ENCODE measurements at regions of chr21 and their contacts with region 1.

Region 1: DNA sequence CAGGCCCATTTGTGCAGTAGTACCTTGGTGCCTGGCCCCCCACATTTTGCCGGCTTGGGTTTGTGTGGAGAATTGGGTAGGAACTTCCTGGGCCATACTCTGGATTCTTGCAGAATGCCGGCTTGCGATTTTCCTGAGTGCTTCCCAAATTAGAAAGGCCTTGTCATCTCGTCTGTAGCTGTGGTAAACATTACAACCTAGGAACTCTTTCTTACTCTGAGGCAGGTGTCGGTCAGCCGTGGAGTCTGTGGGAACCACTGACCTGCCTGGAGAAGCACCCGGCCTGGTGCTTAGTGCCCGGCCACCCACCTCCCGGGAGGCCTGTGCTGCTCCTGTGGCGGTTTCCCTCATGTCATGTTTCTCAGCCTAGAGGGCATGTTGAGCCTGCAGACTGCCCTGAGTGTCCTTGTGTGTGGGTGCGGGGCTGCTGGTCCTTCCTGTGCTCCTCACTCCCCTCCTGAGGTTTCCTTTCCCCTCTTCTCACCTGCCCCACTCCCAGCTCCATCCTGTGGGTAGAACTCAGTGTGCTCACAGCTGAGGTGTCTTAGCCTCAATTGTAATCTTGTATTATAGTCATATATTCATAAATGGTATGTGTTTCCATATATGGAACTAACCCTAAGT is 64.7 kb downstream of the S100B start:
- DNase-seq: peak in 1 of 2 donors; percentile 32
- ATAC-seq: peak in 1 of 3 donors; percentile 11
- H3K4me3 ChIP-seq: no peak overlapping the region
- H3K4me3 Mint-ChIP-seq: no peak overlapping the region
- H3K27ac ChIP-seq: no peak overlapping the region
- H3K27ac Mint-ChIP-seq: peak overlapping the region in 1 of 2 donors; percentile 79
- H3K4me1 ChIP-seq: no peaks in the 10 kb centered on the region
- H3K4me1 Mint-ChIP-seq: peaks cover 0 to 85% of the 10 kb centered on the region in 2 donors
- H3K27me3 ChIP-seq: no peaks in the 10 kb centered on the region
- H3K27me3 Mint-ChIP-seq: no peaks in the 10 kb centered on the region
- CTCF ChIP-seq: no peak

Region 2: DNA sequence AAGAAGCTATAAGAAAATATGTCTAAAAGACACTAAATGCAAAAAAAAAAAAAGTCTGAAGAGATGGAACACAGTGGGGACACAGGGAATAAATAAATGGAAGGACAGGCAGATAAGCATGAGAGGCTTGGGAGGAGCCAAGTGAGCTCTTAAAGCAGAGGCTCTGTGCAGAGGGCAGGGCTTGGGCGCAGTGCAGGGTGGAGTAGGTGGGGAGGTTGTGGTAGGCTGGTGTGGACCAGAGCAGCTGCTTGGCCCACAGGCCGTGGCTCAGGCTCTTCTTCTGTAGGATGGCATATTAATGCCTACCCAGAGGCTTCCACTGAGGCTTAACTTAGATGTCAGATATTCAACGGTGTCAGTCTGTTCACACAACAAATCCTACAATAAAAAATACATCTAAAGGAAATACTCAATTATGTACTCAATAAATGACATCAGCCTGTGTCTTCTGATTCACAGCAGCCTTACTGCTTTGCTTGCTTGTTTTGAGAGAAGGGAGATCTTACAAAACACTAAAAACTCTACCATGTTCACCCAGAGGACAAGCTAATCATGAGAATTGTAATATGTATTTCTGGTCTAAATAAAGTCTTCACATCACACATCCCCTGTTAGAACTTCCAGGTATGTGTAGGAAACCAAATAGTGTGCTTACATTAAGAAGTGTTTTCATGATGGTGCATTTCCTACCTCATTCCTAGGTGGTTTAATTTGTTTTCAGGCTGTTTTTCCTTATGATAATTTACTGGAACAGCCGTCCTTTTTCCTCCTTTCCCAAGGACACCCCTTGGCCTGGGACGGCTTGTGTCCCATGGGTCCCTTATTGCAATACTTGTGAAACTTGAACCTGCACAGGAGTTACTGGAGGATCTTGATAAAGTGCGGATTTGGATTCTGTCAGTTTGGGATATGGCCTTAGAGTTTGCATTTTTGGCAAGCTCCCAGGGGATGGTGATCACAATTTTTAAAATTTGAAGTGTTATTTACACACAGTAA is 56.6 kb before region 1 on chr21:
- intact Hi-C with region 1: loop called (anchors 5 kb)
- DNase-seq: peak; percentile 33 to 49
- ATAC-seq: peak; percentile 84 to 98 (median 91)
- H3K4me3 ChIP-seq: no peak overlapping the region
- H3K4me3 Mint-ChIP-seq: peak overlapping the region; percentile 73
- H3K27ac ChIP-seq: peak overlapping the region; percentile 39
- H3K27ac Mint-ChIP-seq: peak overlapping the region; percentile 71 to 90
- H3K4me1 ChIP-seq: peaks cover 17% of the 10 kb centered on the region
- H3K4me1 Mint-ChIP-seq: peaks cover 62 to 68% of the 10 kb centered on the region in 2 donors
- H3K27me3 ChIP-seq: no peaks in the 10 kb centered on the region
- H3K27me3 Mint-ChIP-seq: no peaks in the 10 kb centered on the region
- CTCF ChIP-seq: no peak

Region 3: DNA sequence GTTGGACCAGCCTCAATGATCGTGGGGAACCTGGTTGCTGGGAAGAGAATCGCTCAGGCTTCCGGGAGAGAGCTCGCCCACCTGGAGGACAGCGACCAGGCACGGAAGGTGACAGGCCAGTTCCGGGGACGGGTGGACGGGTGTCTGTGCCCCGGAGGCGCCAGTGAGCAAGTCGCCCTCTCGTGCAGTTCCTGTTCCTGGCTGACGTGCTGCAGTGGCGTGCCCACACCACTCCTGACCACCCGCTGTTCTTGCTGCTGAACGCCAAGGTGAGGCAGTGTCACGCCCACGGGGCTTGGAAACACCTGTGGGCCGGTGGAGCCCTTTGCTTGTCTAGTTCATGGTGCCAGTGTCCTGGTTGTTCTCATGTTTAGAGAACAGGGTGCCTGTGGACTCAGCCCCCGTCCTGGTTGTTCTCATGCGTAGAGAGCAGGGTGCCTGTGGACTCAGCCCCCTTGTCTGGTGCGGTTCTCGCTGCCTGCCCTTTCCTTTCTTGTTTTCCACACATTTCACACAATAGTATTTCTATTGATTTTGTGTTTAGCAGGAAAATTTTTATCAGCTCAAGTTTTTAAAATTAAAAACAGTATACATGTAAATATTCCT is 11.5 kb after region 1 on chr21:
- intact Hi-C with region 1: loop called (anchors 2 kb)
- DNase-seq: peak; percentile 51 to 66
- ATAC-seq: peak; percentile 72 to 80 (median 76)
- H3K4me3 ChIP-seq: peak overlapping the region; percentile 22
- H3K4me3 Mint-ChIP-seq: peak overlapping the region; percentile 85
- H3K27ac ChIP-seq: peak overlapping the region; percentile 89
- H3K27ac Mint-ChIP-seq: peak overlapping the region; percentile 86 to 93
- H3K4me1 ChIP-seq: peaks cover 44% of the 10 kb centered on the region
- H3K4me1 Mint-ChIP-seq: peaks cover 37 to 74% of the 10 kb centered on the region in 2 donors
- H3K27me3 ChIP-seq: no peaks in the 10 kb centered on the region
- H3K27me3 Mint-ChIP-seq: no peaks in the 10 kb centered on the region
- CTCF ChIP-seq: peak; percentile 10

Region 4: GRCh38 chr21:46572850-46573249 is 32.7 kb after region 1 on chr21:
- intact Hi-C with region 1: loop called (anchors 1 kb)
- DNase-seq: no peak
- ATAC-seq: no peak
- H3K4me3 ChIP-seq: no peak overlapping the region
- H3K4me3 Mint-ChIP-seq: no peak overlapping the region
- H3K27ac ChIP-seq: no peak overlapping the region
- H3K27ac Mint-ChIP-seq: peak overlapping the region in 1 of 2 donors; percentile 53
- H3K4me1 ChIP-seq: no peaks in the 10 kb centered on the region
- H3K4me1 Mint-ChIP-seq: peaks cover 17 to 56% of the 10 kb centered on the region in 2 donors
- H3K27me3 ChIP-seq: no peaks in the 10 kb centered on the region
- H3K27me3 Mint-ChIP-seq: no peaks in the 10 kb centered on the region
- CTCF ChIP-seq: no peak